ENCODE measurements at regions of chr20 and their contacts with region 1.

Region 1: GRCh38 chr20:17542993-17543412 is 11.8 kb upstream of the BFSP1 start:
- DNase-seq: peak; percentile 81
- H3K4me3 ChIP-seq: no peak overlapping the region
- CTCF ChIP-seq: no peak

Region 2: DNA sequence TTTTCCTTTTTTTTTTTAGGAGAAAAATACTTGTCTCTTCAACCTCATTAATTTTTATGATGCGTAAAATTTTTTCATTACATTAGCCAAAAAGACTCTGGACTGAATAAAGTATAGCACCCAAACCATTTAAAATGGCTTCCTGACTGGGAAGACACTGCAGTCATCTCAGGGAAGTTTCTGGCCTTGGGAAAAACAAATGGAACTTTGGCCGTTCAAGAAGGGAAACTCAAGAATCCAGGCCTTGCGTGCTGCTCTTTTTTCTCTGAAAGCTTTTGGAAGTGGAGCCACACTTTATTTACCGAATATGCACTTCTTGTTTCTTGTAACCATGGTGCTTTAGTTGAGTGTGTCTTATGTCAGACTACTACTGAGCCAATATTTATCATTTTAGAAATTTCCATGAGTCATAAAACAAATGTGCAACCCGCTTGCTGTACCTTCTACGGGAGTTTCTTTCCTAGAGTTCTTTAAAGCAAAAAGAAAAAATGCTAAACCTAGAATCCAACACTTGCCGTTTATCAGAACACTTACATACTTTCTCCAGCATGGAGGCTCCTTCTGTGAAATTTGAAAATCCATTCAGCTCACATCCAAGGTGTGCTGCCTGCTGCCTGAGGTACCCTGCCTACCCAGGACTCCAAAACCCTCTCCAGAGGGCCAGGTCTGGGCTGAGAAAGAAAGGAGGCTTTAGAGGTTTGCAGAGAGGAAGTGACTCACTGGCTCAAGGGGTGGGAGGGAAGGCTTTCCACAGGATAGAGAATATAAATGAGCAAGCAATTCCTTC is 15.3 kb after region 1 on chr20:
- CTCF ChIA-PET with region 1: interaction called, 44 read pairs
- POLR2A ChIA-PET with region 1: interaction called, 5 read pairs
- DNase-seq: no peak
- H3K4me3 ChIP-seq: peak overlapping the region; percentile 39
- CTCF ChIP-seq: no peak

Region 3: GRCh38 chr20:17569616-17570346 is 26.8 kb after region 1 on chr20 and contains the start of gene DSTN:
- CTCF ChIA-PET with region 1: interaction called, 43 read pairs
- POLR2A ChIA-PET with region 1: interaction called, 26 read pairs
- DNase-seq: peak; percentile 86
- H3K4me3 ChIP-seq: peak within 1 kb of the TSS; percentile 82
- CTCF ChIP-seq: no peak

Region 4: GRCh38 chr20:17617551-17618223 is 74.7 kb after region 1 on chr20:
- CTCF ChIA-PET with region 1: interaction called, 15 read pairs
- POLR2A ChIA-PET with region 1: no interaction called
- DNase-seq: no peak
- H3K4me3 ChIP-seq: no peak overlapping the region
- CTCF ChIP-seq: peak; percentile 66

Measured in AG04449 (cell line).